Activated B cell treated with CpG ODN at 0.5 μM for 24 hours (primary cell): ENCODE measurements at regions of chr9 and their contacts with region 1.

Region 1: GRCh38 chr9:89450213-89450612 is 47.7 kb downstream of the SEMA4D start:
- DNase-seq: no peak
- ATAC-seq: no peak
- H3K4me3 Mint-ChIP-seq: no peak overlapping the region
- H3K27ac Mint-ChIP-seq: no peak overlapping the region
- H3K4me1 Mint-ChIP-seq: peaks cover 60% of the 10 kb centered on the region
- H3K27me3 Mint-ChIP-seq: no peaks in the 10 kb centered on the region
- CTCF ChIP-seq: no peak

Region 2: GRCh38 chr9:89339807-89340206 is 110.4 kb before region 1 on chr9:
- CTCF ChIA-PET with region 1: no interaction called
- POLR2A ChIA-PET with region 1: interaction called, 11 read pairs
- intact Hi-C with region 1: no loop called
- DNase-seq: no peak
- ATAC-seq: no peak
- H3K4me3 Mint-ChIP-seq: no peak overlapping the region
- H3K27ac Mint-ChIP-seq: no peak overlapping the region
- H3K4me1 Mint-ChIP-seq: no peaks in the 10 kb centered on the region
- H3K27me3 Mint-ChIP-seq: no peaks in the 10 kb centered on the region
- CTCF ChIP-seq: no peak

Region 3: DNA sequence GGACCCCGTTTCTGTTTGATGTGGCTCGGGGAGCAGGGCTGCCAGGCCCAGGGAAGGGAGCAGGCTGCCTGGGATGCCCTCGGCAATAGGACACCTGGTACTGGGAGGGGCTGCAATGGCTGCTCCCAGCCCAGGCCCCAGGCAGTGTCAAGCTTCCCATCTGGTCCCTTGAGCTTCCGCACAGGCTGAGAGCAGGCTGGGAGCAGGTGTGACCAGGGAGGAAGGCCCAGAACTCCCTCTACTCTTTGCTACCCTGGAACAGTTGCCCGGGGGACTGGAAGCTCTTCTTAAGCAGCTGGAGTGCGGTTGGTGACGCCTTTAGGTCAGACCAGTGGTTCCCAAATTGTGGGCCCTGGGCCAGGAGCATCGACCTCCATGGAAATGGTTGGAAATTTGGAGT is 341.5 kb after region 1 on chr9:
- CTCF ChIA-PET with region 1: no interaction called
- POLR2A ChIA-PET with region 1: no interaction called
- intact Hi-C with region 1: no loop called
- DNase-seq: no peak
- ATAC-seq: no peak
- H3K4me3 Mint-ChIP-seq: no peak overlapping the region
- H3K27ac Mint-ChIP-seq: no peak overlapping the region
- H3K4me1 Mint-ChIP-seq: no peaks in the 10 kb centered on the region
- H3K27me3 Mint-ChIP-seq: no peaks in the 10 kb centered on the region
- CTCF ChIP-seq: no peak